ENCODE measurements at regions of chr16 and their contacts with region 1.

Region 1: DNA sequence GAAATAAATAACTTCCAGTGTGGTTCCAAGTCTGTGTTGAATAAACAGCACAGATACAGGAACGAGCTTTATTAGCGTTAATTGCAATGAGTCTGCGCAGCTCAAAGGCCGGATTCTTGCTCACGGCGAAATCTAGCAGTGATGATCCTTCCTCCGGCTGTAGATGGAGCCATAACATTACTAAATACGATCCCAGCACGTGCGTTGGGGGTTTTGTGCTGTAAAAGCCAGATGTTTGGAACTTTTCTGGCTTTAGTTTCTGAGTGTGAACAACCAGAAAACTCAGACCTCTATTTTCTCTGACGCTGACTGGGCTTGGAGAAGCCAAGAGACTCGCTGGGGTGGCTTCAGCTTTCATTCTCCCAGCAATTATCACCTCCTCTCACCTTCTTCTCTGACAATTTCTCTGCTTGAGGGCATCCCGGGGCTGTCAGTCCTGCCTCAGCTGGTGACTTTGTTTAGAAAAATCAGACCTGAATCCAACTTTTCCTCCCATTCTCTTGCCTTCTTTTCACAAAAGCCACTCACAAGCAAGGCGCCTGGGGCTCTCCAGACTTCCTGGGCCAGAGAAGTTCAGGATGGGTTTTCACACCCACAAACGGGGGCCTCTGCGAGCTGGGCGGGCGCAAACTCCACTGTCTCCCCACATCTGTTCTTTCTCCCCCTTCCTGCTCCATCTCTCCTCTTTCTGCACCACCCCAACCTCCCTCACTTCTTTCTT is 47.1 kb upstream of the AKTIP start:
- DNase-seq: peak in 8 of 9 donors; percentile 33 to 66 (median 52)
- ATAC-seq: peak; percentile 71
- H3K4me3 ChIP-seq: no peak overlapping the region
- H3K4me3 Mint-ChIP-seq: peak overlapping the region in 1 of 10 donors; percentile 7
- H3K27ac ChIP-seq: no peak overlapping the region
- H3K27ac Mint-ChIP-seq: no peak overlapping the region
- H3K4me1 ChIP-seq: peaks cover 8 to 15% of the 10 kb centered on the region in 2 donors
- H3K4me1 Mint-ChIP-seq: peaks cover 11 to 39% (median 27%) of the 10 kb centered on the region in 7 donors
- H3K27me3 ChIP-seq: peaks cover 0 to 8% of the 10 kb centered on the region in 2 donors
- H3K27me3 Mint-ChIP-seq: peaks cover 17 to 44% (median 19%) of the 10 kb centered on the region in 5 donors

Region 2: GRCh38 chr16:53518550-53519416 is 31.3 kb before region 1 on chr16:
- CTCF ChIA-PET with region 1: interaction called, 4 read pairs
- POLR2A ChIA-PET with region 1: interaction called, 13 read pairs
- intact Hi-C with region 1: loop called (anchors 1 kb)
- DNase-seq: peak; percentile 26 to 87 (median 83)
- ATAC-seq: peak; percentile 95
- H3K4me3 ChIP-seq: peak overlapping the region; percentile 66
- H3K4me3 Mint-ChIP-seq: peak overlapping the region; percentile 70 to 90 (median 82)
- H3K27ac ChIP-seq: no peak overlapping the region
- H3K27ac Mint-ChIP-seq: peak overlapping the region in 8 of 9 donors; percentile 52 to 94 (median 86)
- H3K4me1 ChIP-seq: peaks cover 35 to 36% of the 10 kb centered on the region in 2 donors
- H3K4me1 Mint-ChIP-seq: peaks cover 38 to 63% (median 55%) of the 10 kb centered on the region in 7 donors
- H3K27me3 ChIP-seq: no peaks in the 10 kb centered on the region
- H3K27me3 Mint-ChIP-seq: peaks cover 0 to 28% (median 7%) of the 10 kb centered on the region in 5 donors

Region 3: DNA sequence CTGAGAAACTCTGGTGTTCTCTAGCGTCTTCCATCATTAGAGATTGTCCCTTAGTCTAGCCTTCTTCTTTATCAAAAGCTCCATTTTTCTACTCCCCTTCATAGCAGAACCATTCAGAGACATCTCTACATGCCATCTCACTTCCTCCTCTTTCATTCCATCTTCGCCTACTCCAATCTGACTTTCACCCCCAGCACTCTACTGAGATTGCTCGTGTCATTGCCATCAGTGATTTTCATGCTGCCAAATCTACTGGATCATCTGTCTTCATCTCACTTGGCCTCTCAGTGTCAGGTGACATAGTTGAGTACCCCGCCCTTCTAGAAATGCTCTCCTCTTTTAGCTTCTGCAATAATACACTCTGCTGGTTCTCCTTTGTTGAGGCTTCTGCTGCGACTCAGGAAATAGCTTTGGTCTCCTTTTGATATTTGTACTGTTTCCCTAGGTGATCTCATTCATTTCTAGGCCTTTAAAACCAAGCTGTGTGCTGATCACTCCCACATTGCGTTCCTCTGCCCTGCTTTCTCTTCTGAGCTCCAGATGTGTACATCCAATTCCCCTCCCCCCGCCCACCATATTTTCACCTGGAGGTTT is 272.9 kb after region 1 on chr16:
- CTCF ChIA-PET with region 1: interaction called, 4 read pairs
- POLR2A ChIA-PET with region 1: no interaction called
- intact Hi-C with region 1: loop called in 1 of 2 experiments (anchors 2 kb)
- DNase-seq: peak in 7 of 9 donors; percentile 63 to 86 (median 77)
- ATAC-seq: peak; percentile 97
- H3K4me3 ChIP-seq: no peak overlapping the region
- H3K4me3 Mint-ChIP-seq: no peak overlapping the region
- H3K27ac ChIP-seq: peak overlapping the region; percentile 47
- H3K27ac Mint-ChIP-seq: no peak overlapping the region
- H3K4me1 ChIP-seq: peaks cover 8 to 23% of the 10 kb centered on the region in 2 donors
- H3K4me1 Mint-ChIP-seq: peaks cover 0 to 19% (median 16%) of the 10 kb centered on the region in 7 donors
- H3K27me3 ChIP-seq: no peaks in the 10 kb centered on the region
- H3K27me3 Mint-ChIP-seq: no peaks in the 10 kb centered on the region

Region 4: DNA sequence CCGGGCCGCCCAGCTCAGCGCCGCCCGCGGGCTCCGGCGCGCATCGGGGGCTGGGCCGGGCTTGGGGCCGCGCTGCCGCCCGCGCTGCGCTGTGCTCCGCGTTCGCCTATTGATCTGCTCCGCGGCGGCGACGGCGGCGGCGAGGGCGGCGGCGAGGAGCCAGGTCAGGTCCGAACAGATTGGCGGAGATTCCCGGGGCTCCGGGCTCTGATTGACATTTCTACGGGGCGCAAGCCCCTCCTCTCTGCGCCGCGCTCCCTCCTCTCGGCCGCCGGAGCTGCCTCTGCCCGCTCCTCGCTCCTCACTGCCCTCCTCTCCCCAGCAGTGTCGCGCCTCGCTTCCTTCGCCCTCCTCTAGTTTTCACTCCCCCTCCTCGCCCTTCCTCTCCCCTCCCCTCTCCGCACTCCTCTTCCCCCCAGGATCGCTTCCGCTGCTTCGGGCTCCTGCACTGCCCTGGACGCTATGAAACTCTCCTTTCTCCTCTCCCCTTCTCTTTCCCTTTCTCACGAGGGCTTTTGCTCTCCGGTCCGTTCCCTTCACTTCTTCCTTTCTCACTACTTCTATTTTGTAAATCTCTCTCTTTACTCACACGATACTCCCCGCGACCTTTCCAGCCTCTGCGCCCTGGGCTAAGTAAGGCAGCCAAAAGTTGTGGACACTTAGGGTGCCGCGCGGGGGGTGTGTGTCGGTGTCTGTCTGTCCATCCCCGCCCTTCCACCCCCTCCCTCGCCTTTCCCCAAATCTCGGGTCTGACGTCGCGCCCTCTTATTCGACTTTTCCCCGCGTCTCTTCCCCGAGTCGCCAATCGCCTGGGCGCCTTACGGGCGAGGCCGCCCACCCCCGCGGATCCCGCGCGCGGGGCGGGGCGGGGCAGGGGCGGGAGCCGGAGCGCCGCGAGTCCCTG is 736.2 kb after region 1 on chr16 and contains the start of gene IRX3:
- CTCF ChIA-PET with region 1: no interaction called
- POLR2A ChIA-PET with region 1: no interaction called
- intact Hi-C with region 1: loop called (anchors 2 to 5 kb)
- DNase-seq: peak in 1 of 9 donors; percentile 41
- ATAC-seq: no peak
- H3K4me3 ChIP-seq: no peak within 1 kb of the TSS
- H3K4me3 Mint-ChIP-seq: peak within 1 kb of the TSS; percentile 38 to 90 (median 75)
- H3K27ac ChIP-seq: no peak within 1 kb of the TSS
- H3K27ac Mint-ChIP-seq: peak within 1 kb of the TSS in 1 of 9 donors; percentile 71
- H3K4me1 ChIP-seq: no peaks in the 10 kb centered on the region
- H3K4me1 Mint-ChIP-seq: peaks cover 19 to 53% (median 34%) of the 10 kb centered on the region in 7 donors
- H3K27me3 ChIP-seq: no peaks in the 10 kb centered on the region
- H3K27me3 Mint-ChIP-seq: peaks cover 47 to 78% (median 67%) of the 10 kb centered on the region in 5 donors
- total RNA-seq, gene IRX3: 3.2 TPM in 1 of 5 experiments, not detected in the others

Region 5: GRCh38 chr16:54957403-54958171 is 1407.5 kb after region 1 on chr16:
- CTCF ChIA-PET with region 1: no interaction called
- POLR2A ChIA-PET with region 1: no interaction called
- intact Hi-C with region 1: loop called in 1 of 2 experiments (anchors 10 kb)
- DNase-seq: no peak
- ATAC-seq: no peak
- H3K4me3 ChIP-seq: no peak overlapping the region
- H3K4me3 Mint-ChIP-seq: no peak overlapping the region
- H3K27ac ChIP-seq: no peak overlapping the region
- H3K27ac Mint-ChIP-seq: no peak overlapping the region
- H3K4me1 ChIP-seq: no peaks in the 10 kb centered on the region
- H3K4me1 Mint-ChIP-seq: no peaks in the 10 kb centered on the region
- H3K27me3 ChIP-seq: no peaks in the 10 kb centered on the region
- H3K27me3 Mint-ChIP-seq: peaks cover 0 to 17% (median 11%) of the 10 kb centered on the region in 5 donors

Measured in naive thymus-derived CD4-positive, alpha-beta T cell (primary cell).